HepG2 (cell line): ENCODE measurements at regions of chr7 and their contacts with region 1.

Region 1: DNA sequence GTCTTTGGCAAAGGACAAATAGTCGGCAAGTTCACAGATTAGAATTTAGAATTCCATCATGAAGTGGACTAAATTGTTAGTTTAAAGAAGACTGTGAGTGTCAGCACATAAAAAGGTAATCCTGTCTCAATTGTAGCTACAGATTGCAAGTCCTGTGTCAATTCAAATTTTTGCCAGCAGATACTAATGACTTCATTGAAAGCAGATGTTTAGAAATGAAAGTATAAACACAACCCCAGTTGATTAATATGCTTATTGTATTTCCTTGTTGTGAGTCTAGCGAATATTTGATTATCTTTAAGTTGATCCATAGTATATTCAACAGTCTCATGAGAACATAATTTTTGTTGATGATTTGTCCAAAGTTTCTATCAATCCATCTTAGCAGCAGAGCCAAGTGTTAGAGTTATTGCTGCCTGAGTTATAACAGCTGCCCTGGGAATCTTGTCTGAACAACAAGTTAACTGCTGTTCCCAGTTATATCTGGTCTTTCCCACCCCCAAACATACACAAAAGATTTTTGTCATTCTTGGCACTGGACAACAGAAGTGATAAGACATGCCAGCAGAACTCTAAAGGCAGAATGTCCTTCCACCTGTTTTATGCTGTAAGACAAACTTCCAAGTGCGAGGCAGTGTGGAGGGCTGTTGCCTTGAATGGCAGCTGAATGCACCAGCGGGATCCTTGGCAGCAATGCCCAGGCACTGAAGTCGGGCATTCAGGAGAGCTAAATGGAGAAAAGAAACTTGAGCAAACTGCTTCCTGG is 21.3 kb upstream of the HERPUD2 start:
- DNase-seq: no peak
- ATAC-seq: no peak
- H3K4me3 ChIP-seq: no peak overlapping the region
- H3K27ac ChIP-seq: no peak overlapping the region
- H3K4me1 ChIP-seq: peaks cover 43% of the 10 kb centered on the region
- H3K27me3 ChIP-seq: no peaks in the 10 kb centered on the region
- CTCF ChIP-seq: no peak
- EP300 ChIP-seq: no peak
- POLR2A ChIP-seq: no peak
- RAD21 ChIP-seq: no peak

Region 2: DNA sequence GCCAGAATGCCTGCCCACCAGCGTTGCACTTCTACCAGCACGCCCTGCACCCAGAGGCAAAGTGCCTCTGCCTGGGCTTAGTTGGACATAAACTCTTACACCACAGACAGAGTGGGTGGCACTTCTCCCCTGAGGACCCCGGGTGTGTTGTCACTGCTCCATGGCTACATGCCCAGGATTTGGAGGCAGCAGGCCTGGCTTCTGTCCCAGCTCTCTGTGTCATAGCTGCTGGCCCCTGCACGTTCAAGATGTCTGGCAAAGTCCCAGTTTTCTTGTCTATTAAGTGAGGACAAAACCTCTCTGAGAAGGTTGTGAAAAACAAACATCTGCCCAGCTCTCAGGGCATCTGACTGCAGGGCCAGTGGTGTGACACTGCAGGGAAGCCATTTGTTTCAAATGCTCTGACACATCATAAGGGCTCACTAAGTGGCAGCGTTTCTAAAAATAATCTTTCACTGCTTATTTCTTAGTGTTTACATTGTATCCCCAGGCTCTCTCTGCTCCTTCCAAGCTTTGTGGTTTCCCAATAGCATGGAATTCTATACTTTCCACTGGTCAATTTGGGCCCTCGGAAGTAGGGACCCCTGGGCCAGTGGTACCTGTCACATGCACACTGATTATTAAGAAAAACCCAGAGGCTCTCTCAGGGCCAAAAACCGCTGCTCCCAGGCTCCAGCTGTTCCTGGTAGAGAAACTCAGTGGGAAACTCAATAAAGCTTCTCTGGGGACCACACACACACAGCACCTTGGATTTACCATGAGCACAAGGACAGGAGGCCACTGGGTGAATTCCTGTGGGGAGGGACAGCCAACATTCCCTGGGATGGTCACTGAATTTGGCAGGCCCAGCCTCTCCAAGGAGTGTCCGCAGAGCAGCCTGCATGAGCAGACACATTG is 587.2 kb after region 1 on chr7:
- CTCF ChIA-PET with region 1: no interaction called
- POLR2A ChIA-PET with region 1: no interaction called
- in situ Hi-C with region 1: loop called (anchors 25 kb)
- intact Hi-C with region 1: no loop called
- DNase-seq: peak; percentile 59
- ATAC-seq: peak; percentile 27
- H3K4me3 ChIP-seq: no peak overlapping the region
- H3K27ac ChIP-seq: no peak overlapping the region
- H3K4me1 ChIP-seq: peaks cover 29% of the 10 kb centered on the region
- H3K27me3 ChIP-seq: no peaks in the 10 kb centered on the region
- CTCF ChIP-seq: no peak
- EP300 ChIP-seq: no peak
- POLR2A ChIP-seq: no peak
- RAD21 ChIP-seq: no peak